CD8-positive, alpha-beta T cell (primary cell): ENCODE measurements at regions of chr6 and their contacts with region 1.

Region 1: GRCh38 chr6:31441365-31442267 is 38.2 kb downstream of the MICA start:
- DNase-seq: peak in 8 of 9 experiments; percentile 80 to 93 (median 84)
- ATAC-seq: peak; percentile 98
- H3K4me3 ChIP-seq: no peak overlapping the region
- H3K4me3 Mint-ChIP-seq: no peak overlapping the region
- H3K27ac ChIP-seq: no peak overlapping the region
- H3K27ac Mint-ChIP-seq: no peak overlapping the region
- H3K4me1 ChIP-seq: peaks cover 7% of the 10 kb centered on the region
- H3K4me1 Mint-ChIP-seq: peaks cover 5% of the 10 kb centered on the region
- H3K27me3 ChIP-seq: peaks cover 0 to 3% of the 10 kb centered on the region in 2 experiments
- H3K27me3 Mint-ChIP-seq: peaks cover 37% of the 10 kb centered on the region
- CTCF ChIP-seq: peak; percentile 75

Region 2: GRCh38 chr6:31139599-31139998 is 302.0 kb before region 1 on chr6:
- CTCF ChIA-PET with region 1: interaction called, 4 read pairs
- POLR2A ChIA-PET with region 1: no interaction called
- intact Hi-C with region 1: loop called in 1 of 2 experiments (anchors 1 kb)
- DNase-seq: no peak
- ATAC-seq: no peak
- H3K4me3 ChIP-seq: no peak overlapping the region
- H3K4me3 Mint-ChIP-seq: no peak overlapping the region
- H3K27ac ChIP-seq: no peak overlapping the region
- H3K27ac Mint-ChIP-seq: no peak overlapping the region
- H3K4me1 ChIP-seq: peaks cover 5% of the 10 kb centered on the region
- H3K4me1 Mint-ChIP-seq: peaks cover 4% of the 10 kb centered on the region
- H3K27me3 ChIP-seq: no peaks in the 10 kb centered on the region
- H3K27me3 Mint-ChIP-seq: no peaks in the 10 kb centered on the region
- CTCF ChIP-seq: no peak

Region 3: DNA sequence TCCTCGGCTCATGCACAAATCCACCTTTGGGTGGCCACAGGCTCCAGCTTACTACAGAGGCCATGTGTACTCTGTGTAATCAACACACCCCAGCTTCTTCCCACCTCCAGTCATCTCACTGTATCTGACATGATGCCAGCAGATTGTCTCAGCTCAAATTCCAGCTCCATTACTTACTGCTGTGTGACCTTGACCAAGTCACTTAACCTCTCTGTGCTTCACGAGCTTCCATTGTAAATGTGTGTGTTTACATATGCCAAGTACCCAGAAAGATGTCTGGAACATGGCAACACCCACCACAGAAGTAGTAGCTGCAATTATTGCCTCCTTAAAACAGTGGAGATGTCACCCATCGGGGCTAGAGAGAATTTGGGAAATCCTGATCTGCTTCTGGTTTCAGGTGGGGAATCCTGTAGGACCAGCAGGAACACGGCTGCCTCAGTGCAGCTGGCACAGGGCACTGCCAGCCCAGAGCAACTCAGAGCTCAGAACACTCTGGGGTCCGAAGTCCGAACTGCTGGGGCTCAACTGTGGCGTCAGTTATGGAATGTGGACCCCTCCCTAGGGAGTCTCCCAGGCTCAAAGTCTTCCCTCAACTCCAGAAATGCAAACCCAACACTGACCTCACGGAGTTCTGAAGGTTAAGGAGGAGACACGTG is 63.4 kb before region 1 on chr6:
- CTCF ChIA-PET with region 1: interaction called, 17 read pairs
- POLR2A ChIA-PET with region 1: interaction called, 3 read pairs
- intact Hi-C with region 1: no loop called
- DNase-seq: no peak
- ATAC-seq: no peak
- H3K4me3 ChIP-seq: no peak overlapping the region
- H3K4me3 Mint-ChIP-seq: no peak overlapping the region
- H3K27ac ChIP-seq: no peak overlapping the region
- H3K27ac Mint-ChIP-seq: no peak overlapping the region
- H3K4me1 ChIP-seq: no peaks in the 10 kb centered on the region
- H3K4me1 Mint-ChIP-seq: no peaks in the 10 kb centered on the region
- H3K27me3 ChIP-seq: peaks cover 0 to 6% of the 10 kb centered on the region in 2 experiments
- H3K27me3 Mint-ChIP-seq: peaks cover 14% of the 10 kb centered on the region
- CTCF ChIP-seq: no peak

Region 4: GRCh38 chr6:31396422-31397152 is 45.0 kb before region 1 on chr6:
- CTCF ChIA-PET with region 1: interaction called, 85 read pairs
- POLR2A ChIA-PET with region 1: interaction called, 4 read pairs
- intact Hi-C with region 1: loop called (anchors 1 kb)
- DNase-seq: peak; percentile 79 to 92 (median 88)
- ATAC-seq: peak; percentile 79
- H3K4me3 ChIP-seq: no peak overlapping the region
- H3K4me3 Mint-ChIP-seq: peak overlapping the region; percentile 2
- H3K27ac ChIP-seq: no peak overlapping the region
- H3K27ac Mint-ChIP-seq: no peak overlapping the region
- H3K4me1 ChIP-seq: peaks cover 17% of the 10 kb centered on the region
- H3K4me1 Mint-ChIP-seq: peaks cover 34% of the 10 kb centered on the region
- H3K27me3 ChIP-seq: no peaks in the 10 kb centered on the region
- H3K27me3 Mint-ChIP-seq: no peaks in the 10 kb centered on the region
- CTCF ChIP-seq: peak; percentile 64

Region 5: GRCh38 chr6:31403283-31403989 is 38.2 kb before region 1 on chr6 and contains the start of gene MICA:
- CTCF ChIA-PET with region 1: interaction called, 85 read pairs
- POLR2A ChIA-PET with region 1: interaction called, 4 read pairs
- intact Hi-C with region 1: no loop called
- DNase-seq: peak in 8 of 9 experiments; percentile 46 to 85 (median 70)
- ATAC-seq: peak; percentile 50
- H3K4me3 ChIP-seq: peak within 1 kb of the TSS; percentile 67
- H3K4me3 Mint-ChIP-seq: peak within 1 kb of the TSS; percentile 94
- H3K27ac ChIP-seq: peak within 1 kb of the TSS; percentile 18 to 85
- H3K27ac Mint-ChIP-seq: peak within 1 kb of the TSS; percentile 92
- H3K4me1 ChIP-seq: peaks cover 34% of the 10 kb centered on the region
- H3K4me1 Mint-ChIP-seq: peaks cover 69% of the 10 kb centered on the region
- H3K27me3 ChIP-seq: no peaks in the 10 kb centered on the region
- H3K27me3 Mint-ChIP-seq: no peaks in the 10 kb centered on the region
- CTCF ChIP-seq: no peak
- total RNA-seq, gene MICA: 5.8 to 6.2 TPM

Region 6: GRCh38 chr6:31430449-31430848 is 11.2 kb before region 1 on chr6:
- CTCF ChIA-PET with region 1: interaction called, 13 read pairs
- POLR2A ChIA-PET with region 1: interaction called, 3 read pairs
- intact Hi-C with region 1: no loop called
- DNase-seq: peak in 2 of 9 experiments; percentile 20 to 36
- ATAC-seq: no peak
- H3K4me3 ChIP-seq: no peak overlapping the region
- H3K4me3 Mint-ChIP-seq: no peak overlapping the region
- H3K27ac ChIP-seq: no peak overlapping the region
- H3K27ac Mint-ChIP-seq: no peak overlapping the region
- H3K4me1 ChIP-seq: no peaks in the 10 kb centered on the region
- H3K4me1 Mint-ChIP-seq: no peaks in the 10 kb centered on the region
- H3K27me3 ChIP-seq: no peaks in the 10 kb centered on the region
- H3K27me3 Mint-ChIP-seq: no peaks in the 10 kb centered on the region
- CTCF ChIP-seq: no peak

Region 7: DNA sequence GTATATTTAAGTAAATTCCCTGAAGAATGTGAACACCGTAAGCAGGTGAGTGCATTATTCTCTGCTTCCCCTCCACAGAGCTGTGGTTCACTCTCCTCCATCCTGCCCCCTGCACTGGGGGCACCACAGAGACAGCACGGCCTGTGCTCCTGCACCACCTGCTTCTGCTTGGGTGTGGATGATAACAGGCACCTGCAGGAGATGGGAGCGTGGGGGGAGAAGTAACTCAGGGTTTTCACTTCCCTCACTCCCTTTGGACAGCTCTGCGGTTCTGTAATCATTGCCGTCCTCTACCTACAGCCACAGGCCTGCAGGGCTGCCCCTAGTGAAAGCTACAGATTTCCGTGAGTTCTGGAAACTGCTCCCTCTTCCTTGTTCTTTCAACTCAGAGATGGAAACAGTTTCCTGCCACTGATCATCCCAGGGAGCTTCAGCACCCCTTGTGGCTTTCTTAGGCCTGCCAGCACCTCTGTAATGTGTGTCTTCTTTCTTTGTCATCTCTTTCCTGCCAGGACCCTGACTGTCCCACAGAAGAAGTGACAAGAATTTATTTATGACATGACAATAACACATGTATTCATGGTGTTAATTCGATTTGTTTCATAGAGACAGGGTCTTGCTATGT is 35.0 kb after region 1 on chr6:
- CTCF ChIA-PET with region 1: no interaction called
- POLR2A ChIA-PET with region 1: no interaction called
- intact Hi-C with region 1: no loop called
- DNase-seq: no peak
- ATAC-seq: no peak
- H3K4me3 ChIP-seq: no peak overlapping the region
- H3K4me3 Mint-ChIP-seq: no peak overlapping the region
- H3K27ac ChIP-seq: no peak overlapping the region
- H3K27ac Mint-ChIP-seq: no peak overlapping the region
- H3K4me1 ChIP-seq: peaks cover 26% of the 10 kb centered on the region
- H3K4me1 Mint-ChIP-seq: peaks cover 49% of the 10 kb centered on the region
- H3K27me3 ChIP-seq: no peaks in the 10 kb centered on the region
- H3K27me3 Mint-ChIP-seq: no peaks in the 10 kb centered on the region
- CTCF ChIP-seq: no peak